Breast epithelium (tissue), 4 donors: ENCODE measurements at regions of chr6 and their contacts with region 1.

Region 1: DNA sequence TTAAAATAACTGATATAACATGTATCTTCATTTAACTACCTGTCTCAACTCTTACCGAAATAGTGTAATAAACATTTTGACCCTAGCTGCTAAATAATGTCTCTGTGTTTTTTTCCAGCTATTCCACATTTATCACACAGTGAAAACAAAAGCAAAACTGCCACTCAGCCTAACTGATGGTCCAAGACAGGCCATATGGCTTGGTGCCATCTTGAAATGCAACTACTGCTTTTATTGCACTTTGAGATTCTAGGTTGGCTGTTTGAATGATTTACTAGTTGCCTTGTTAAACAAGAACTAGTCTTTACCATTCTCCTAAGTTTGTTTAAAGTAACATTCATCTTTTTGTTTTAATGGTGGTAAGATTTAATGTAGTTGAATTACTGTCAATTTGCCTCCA is 739.8 kb downstream of the TFAP2A start:
- DNase-seq: no peak
- H3K4me3 ChIP-seq: no peak overlapping the region
- H3K27ac ChIP-seq: no peak overlapping the region
- H3K4me1 ChIP-seq: no peaks in the 10 kb centered on the region
- H3K27me3 ChIP-seq: no peaks in the 10 kb centered on the region
- CTCF ChIP-seq: no peak
- POLR2A ChIP-seq: no peak

Region 2: GRCh38 chr6:8149350-8149749 is 1525.8 kb before region 1 on chr6:
- intact Hi-C with region 1: loop called (anchors 5 kb)
- DNase-seq: no peak
- H3K4me3 ChIP-seq: no peak overlapping the region
- H3K27ac ChIP-seq: no peak overlapping the region
- H3K4me1 ChIP-seq: no peaks in the 10 kb centered on the region
- H3K27me3 ChIP-seq: no peaks in the 10 kb centered on the region
- CTCF ChIP-seq: no peak
- POLR2A ChIP-seq: no peak